ENCODE measurements at regions of chr19 and their contacts with region 1.

Region 1: GRCh38 chr19:3146677-3147100 is 10.9 kb downstream of the GNA15 start:
- DNase-seq: peak; percentile 79
- H3K4me3 Mint-ChIP-seq: no peak overlapping the region
- H3K27ac Mint-ChIP-seq: no peak overlapping the region
- H3K4me1 Mint-ChIP-seq: peaks cover 24% of the 10 kb centered on the region
- H3K27me3 Mint-ChIP-seq: no peaks in the 10 kb centered on the region

Region 2: GRCh38 chr19:3132971-3133792 is 13.5 kb before region 1 on chr19:
- CTCF ChIA-PET with region 1: interaction called, 59 read pairs
- POLR2A ChIA-PET with region 1: interaction called, 4 read pairs
- intact Hi-C with region 1: loop called (anchors 1 kb)
- DNase-seq: peak; percentile 95
- H3K4me3 Mint-ChIP-seq: peak overlapping the region; percentile 42
- H3K27ac Mint-ChIP-seq: peak overlapping the region; percentile 85
- H3K4me1 Mint-ChIP-seq: peaks cover 34% of the 10 kb centered on the region
- H3K27me3 Mint-ChIP-seq: no peaks in the 10 kb centered on the region

Region 3: DNA sequence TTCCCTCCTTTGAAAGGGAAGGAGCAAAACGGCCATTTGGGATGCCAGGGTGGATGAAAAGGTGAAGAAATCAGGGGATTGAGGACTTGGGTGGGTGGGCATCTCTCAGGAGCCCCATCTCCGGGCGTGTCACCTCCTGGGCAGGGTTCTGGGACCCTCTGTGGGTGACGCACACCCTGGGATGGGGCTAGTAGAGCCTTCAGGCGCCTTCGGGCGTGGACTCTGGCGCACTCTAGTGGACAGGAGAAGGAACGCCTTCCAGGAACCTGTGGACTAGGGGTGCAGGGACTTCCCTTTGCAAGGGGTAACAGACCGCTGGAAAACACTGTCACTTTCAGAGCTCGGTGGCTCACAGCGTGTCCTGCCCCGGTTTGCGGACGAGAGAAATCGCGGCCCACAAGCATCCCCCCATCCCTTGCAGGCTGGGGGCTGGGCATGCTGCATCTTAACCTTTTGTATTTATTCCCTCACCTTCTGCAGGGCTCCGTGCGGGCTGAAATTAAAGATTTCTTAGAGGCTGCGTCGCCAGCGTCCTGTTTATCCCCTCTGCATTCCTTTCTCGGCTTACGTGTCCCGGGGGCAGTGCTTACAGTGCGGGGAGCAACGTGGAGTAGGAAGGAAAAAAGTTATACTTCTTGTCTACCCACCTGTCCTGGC is 16.7 kb after region 1 on chr19:
- CTCF ChIA-PET with region 1: interaction called, 33 read pairs
- POLR2A ChIA-PET with region 1: interaction called, 3 read pairs
- intact Hi-C with region 1: loop called (anchors 1 kb)
- DNase-seq: peak; percentile 78
- H3K4me3 Mint-ChIP-seq: no peak overlapping the region
- H3K27ac Mint-ChIP-seq: peak overlapping the region; percentile 20
- H3K4me1 Mint-ChIP-seq: peaks cover 20% of the 10 kb centered on the region
- H3K27me3 Mint-ChIP-seq: no peaks in the 10 kb centered on the region

Region 4: DNA sequence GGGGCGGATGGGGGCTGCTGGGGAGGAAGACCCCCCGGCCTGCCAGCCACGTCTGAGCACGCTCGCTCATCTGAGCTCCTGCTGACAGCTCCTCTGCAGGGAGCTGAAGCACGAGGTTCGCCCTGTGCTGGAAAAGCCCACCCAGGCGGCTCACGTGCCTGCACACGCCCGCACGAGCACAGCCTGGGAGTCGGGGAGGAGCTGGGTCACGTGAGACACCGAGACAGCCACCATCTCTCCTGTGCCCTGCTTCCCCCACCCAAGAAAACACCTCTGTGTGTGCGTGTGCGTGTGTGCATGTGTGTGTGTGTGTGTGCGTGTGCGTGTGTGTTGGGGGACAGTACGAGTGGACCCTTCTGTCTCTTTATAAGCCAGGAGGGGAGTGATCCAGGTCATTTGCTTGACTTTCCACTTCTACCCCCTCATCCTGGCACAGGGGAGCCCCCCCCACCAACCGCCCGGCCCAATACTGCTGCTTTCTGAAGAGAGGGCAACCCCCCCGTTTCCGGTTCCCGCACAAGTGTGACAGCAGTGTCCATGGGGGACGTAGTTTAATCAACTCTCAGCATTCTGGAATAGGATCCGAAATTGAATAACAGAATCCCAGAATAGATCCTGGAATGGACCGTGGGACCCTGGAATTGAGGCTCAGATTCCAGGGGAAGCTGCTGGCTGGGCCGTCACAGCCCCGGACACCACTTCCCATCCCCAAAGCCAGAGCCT is 120.3 kb after region 1 on chr19:
- CTCF ChIA-PET with region 1: no interaction called
- POLR2A ChIA-PET with region 1: no interaction called
- intact Hi-C with region 1: no loop called
- DNase-seq: no peak
- H3K4me3 Mint-ChIP-seq: no peak overlapping the region
- H3K27ac Mint-ChIP-seq: no peak overlapping the region
- H3K4me1 Mint-ChIP-seq: no peaks in the 10 kb centered on the region
- H3K27me3 Mint-ChIP-seq: peaks cover 28% of the 10 kb centered on the region

Region 5: GRCh38 chr19:3284759-3285646 is 138.3 kb after region 1 on chr19:
- CTCF ChIA-PET with region 1: no interaction called
- POLR2A ChIA-PET with region 1: no interaction called
- intact Hi-C with region 1: no loop called
- DNase-seq: peak; percentile 92
- H3K4me3 Mint-ChIP-seq: peak overlapping the region; percentile 59
- H3K27ac Mint-ChIP-seq: no peak overlapping the region
- H3K4me1 Mint-ChIP-seq: peaks cover 2% of the 10 kb centered on the region
- H3K27me3 Mint-ChIP-seq: peaks cover 6% of the 10 kb centered on the region

Measured in activated CD4-positive, alpha-beta memory T cell treated with anti-CD3 and anti-CD28 coated beads for 36 hours (primary cell).